Naive thymus-derived CD4-positive, alpha-beta T cell (primary cell): ENCODE measurements at regions of chr1 and their contacts with region 1.

Region 1: GRCh38 chr1:37514350-37515184 is at the start of gene MEAF6:
- DNase-seq: peak; percentile 76 to 92 (median 87)
- ATAC-seq: peak; percentile 99
- H3K4me3 ChIP-seq: peak within 1 kb of the TSS; percentile 87
- H3K4me3 Mint-ChIP-seq: peak within 1 kb of the TSS; percentile 92 to 99 (median 98)
- H3K27ac ChIP-seq: peak within 1 kb of the TSS; percentile 89
- H3K27ac Mint-ChIP-seq: peak within 1 kb of the TSS; percentile 93 to 99 (median 98)
- H3K4me1 ChIP-seq: peaks cover 16 to 22% of the 10 kb centered on the region in 2 donors
- H3K4me1 Mint-ChIP-seq: peaks cover 10 to 50% (median 43%) of the 10 kb centered on the region in 7 donors
- H3K27me3 ChIP-seq: no peaks in the 10 kb centered on the region
- H3K27me3 Mint-ChIP-seq: peaks cover 0 to 4% (median 0%) of the 10 kb centered on the region in 5 donors
- total RNA-seq, gene MEAF6: 45.0 to 89.5 (median 57.7) TPM

Region 2: GRCh38 chr1:36199934-36200741 is 1314.4 kb before region 1 on chr1:
- CTCF ChIA-PET with region 1: no interaction called
- POLR2A ChIA-PET with region 1: no interaction called
- intact Hi-C with region 1: no loop called
- DNase-seq: no peak
- ATAC-seq: no peak
- H3K4me3 ChIP-seq: no peak overlapping the region
- H3K4me3 Mint-ChIP-seq: no peak overlapping the region
- H3K27ac ChIP-seq: no peak overlapping the region
- H3K27ac Mint-ChIP-seq: peak overlapping the region in 2 of 9 donors; percentile 26 to 51
- H3K4me1 ChIP-seq: no peaks in the 10 kb centered on the region
- H3K4me1 Mint-ChIP-seq: peaks cover 0 to 2% (median 0%) of the 10 kb centered on the region in 7 donors
- H3K27me3 ChIP-seq: no peaks in the 10 kb centered on the region
- H3K27me3 Mint-ChIP-seq: peaks cover 0 to 4% (median 0%) of the 10 kb centered on the region in 5 donors

Region 3: DNA sequence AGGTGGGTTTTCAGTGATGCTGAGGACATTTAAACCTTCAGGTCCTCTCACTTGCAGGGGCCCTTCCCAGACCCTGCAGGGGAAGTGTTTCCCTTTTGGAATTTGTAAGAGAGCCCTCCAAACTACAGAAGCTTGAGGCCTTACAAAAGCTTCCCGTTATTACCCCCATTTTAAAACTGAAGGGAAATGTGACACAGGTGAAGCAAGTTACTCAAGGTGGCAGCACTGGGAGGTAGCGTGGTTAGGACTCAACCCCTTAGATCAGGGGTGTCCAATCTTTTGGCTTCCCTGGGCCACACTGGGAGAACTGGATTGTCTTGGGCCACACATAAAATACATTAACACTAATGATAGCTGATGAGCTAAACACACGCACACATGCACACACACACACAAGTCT is 56.0 kb before region 1 on chr1:
- CTCF ChIA-PET with region 1: interaction called, 6 read pairs
- POLR2A ChIA-PET with region 1: interaction called, 4 read pairs
- intact Hi-C with region 1: loop called in 1 of 2 experiments (anchors 1 kb)
- DNase-seq: no peak
- ATAC-seq: no peak
- H3K4me3 ChIP-seq: no peak overlapping the region
- H3K4me3 Mint-ChIP-seq: no peak overlapping the region
- H3K27ac ChIP-seq: no peak overlapping the region
- H3K27ac Mint-ChIP-seq: peak overlapping the region in 3 of 9 donors; percentile 30 to 78 (median 46)
- H3K4me1 ChIP-seq: no peaks in the 10 kb centered on the region
- H3K4me1 Mint-ChIP-seq: peaks cover 4 to 16% (median 11%) of the 10 kb centered on the region in 7 donors
- H3K27me3 ChIP-seq: no peaks in the 10 kb centered on the region
- H3K27me3 Mint-ChIP-seq: no peaks in the 10 kb centered on the region

Region 4: DNA sequence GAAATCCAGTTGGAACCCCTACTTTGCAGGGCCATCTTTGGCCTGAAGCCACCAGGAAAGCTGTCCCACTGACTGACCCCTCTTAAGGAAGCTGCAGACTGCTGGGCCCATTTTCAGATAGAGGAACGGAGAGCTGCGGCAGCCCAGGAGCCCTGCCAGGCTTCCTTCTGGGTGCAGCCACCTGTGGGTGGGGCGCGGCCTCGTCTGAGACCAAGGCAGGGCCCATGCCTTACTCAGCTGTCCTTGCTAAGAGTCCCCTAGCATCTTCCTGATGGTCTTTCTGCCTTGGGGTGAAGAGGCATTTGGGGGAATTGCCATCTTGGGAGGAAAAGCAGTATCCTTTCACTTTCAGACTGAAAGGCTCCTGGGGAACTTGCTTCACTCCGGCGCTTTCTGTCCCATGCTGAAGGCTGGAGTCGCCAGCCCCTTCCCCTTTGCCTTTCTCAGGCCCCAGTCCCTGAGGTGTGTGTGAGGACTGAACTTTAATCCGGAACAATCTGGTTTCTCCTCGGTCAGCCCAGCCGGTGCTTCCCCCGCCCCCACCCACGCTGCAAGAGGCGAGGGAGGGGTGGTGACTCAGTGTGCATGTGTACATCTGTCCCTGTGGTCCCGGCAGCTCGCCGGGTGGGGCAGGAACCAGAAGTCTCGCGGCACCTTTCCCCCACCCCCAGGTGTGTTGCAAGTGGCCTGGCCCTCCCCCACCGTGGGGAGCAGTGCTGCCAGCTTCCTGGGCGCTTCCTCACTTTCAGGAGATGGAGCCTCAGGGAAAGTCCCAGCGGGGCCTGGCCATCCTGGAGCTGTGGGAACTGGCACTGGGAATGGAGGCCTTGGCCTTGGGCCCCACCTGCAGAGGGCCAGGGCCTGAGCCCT is 35.1 kb before region 1 on chr1:
- CTCF ChIA-PET with region 1: interaction called, 4 read pairs
- POLR2A ChIA-PET with region 1: interaction called, 52 read pairs
- intact Hi-C with region 1: loop called (anchors 1 to 2 kb)
- DNase-seq: peak in 8 of 9 donors; percentile 54 to 90 (median 63)
- ATAC-seq: peak; percentile 69
- H3K4me3 ChIP-seq: peak overlapping the region; percentile 87
- H3K4me3 Mint-ChIP-seq: peak overlapping the region; percentile 91 to 99 (median 96)
- H3K27ac ChIP-seq: peak overlapping the region; percentile 95
- H3K27ac Mint-ChIP-seq: peak overlapping the region; percentile 96 to 99 (median 98)
- H3K4me1 ChIP-seq: peaks cover 26% of the 10 kb centered on the region in 2 donors
- H3K4me1 Mint-ChIP-seq: peaks cover 21 to 50% (median 34%) of the 10 kb centered on the region in 7 donors
- H3K27me3 ChIP-seq: no peaks in the 10 kb centered on the region
- H3K27me3 Mint-ChIP-seq: no peaks in the 10 kb centered on the region

Region 5: DNA sequence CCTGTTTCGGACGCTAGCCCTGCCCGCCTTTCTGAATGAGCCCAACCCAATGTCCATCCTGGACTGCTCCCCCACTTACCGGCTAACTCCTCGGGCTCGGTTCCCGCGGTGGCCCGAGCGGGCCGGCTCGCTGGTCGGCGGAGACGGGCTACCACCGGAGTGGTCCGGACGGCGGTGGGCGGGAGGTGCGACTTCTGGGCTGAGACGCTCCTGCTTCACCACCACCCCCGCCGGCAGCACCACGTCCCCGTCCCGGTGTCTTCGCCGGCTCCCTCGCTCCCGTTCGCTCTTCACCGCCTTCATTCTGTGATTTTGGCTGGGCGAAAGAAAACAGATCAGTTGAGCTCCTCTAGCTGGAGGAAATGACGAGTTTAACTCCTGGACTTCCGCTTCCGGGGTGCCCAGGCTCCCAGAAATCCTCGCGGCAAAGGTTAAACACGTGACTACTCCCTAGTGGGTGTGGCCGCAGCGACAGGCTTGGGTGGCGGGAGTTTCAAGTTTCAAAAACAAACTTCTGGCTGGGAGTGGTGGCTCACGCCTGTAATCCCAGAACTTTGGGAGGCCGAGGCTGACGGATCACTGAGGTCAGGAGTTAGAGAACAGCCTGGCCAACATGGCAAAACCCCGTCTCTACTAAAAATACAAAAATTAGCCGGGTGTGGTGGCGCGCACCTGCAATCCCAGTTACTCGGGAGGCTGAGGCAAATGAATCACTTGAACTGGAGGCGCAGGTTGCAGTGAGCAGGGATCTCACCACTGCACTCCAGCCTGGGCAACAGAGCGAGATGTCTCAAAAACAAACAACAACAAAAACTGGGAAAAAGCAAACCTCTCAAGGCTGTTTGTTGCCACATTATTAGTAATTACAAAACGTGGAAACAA is 39.6 kb after region 1 on chr1 and contains the start of gene SNIP1:
- CTCF ChIA-PET with region 1: no interaction called
- POLR2A ChIA-PET with region 1: interaction called, 20 read pairs
- intact Hi-C with region 1: loop called (anchors 1 kb)
- DNase-seq: peak; percentile 67 to 94 (median 92)
- ATAC-seq: peak; percentile 99
- H3K4me3 ChIP-seq: peak within 1 kb of the TSS; percentile 92
- H3K4me3 Mint-ChIP-seq: peak within 1 kb of the TSS; percentile 97 to 100 (median 99)
- H3K27ac ChIP-seq: peak within 1 kb of the TSS; percentile 94
- H3K27ac Mint-ChIP-seq: peak within 1 kb of the TSS; percentile 91 to 99 (median 98)
- H3K4me1 ChIP-seq: peaks cover 10 to 24% of the 10 kb centered on the region in 2 donors
- H3K4me1 Mint-ChIP-seq: peaks cover 23 to 51% (median 45%) of the 10 kb centered on the region in 7 donors
- H3K27me3 ChIP-seq: no peaks in the 10 kb centered on the region
- H3K27me3 Mint-ChIP-seq: peaks cover 0 to 6% (median 0%) of the 10 kb centered on the region in 5 donors
- total RNA-seq, gene SNIP1: 27.8 to 53.6 (median 36.7) TPM

Region 6: GRCh38 chr1:37859507-37860345 is 345.2 kb after region 1 on chr1 and contains the start of gene MTF1:
- CTCF ChIA-PET with region 1: no interaction called
- POLR2A ChIA-PET with region 1: no interaction called
- intact Hi-C with region 1: loop called in 1 of 2 experiments (anchors 1 kb)
- DNase-seq: peak; percentile 85 to 98 (median 97)
- ATAC-seq: peak; percentile 99
- H3K4me3 ChIP-seq: peak within 1 kb of the TSS; percentile 94
- H3K4me3 Mint-ChIP-seq: peak within 1 kb of the TSS; percentile 89 to 100 (median 96)
- H3K27ac ChIP-seq: peak within 1 kb of the TSS; percentile 89
- H3K27ac Mint-ChIP-seq: peak within 1 kb of the TSS; percentile 90 to 99 (median 95)
- H3K4me1 ChIP-seq: peaks cover 12 to 19% of the 10 kb centered on the region in 2 donors
- H3K4me1 Mint-ChIP-seq: peaks cover 26 to 39% (median 33%) of the 10 kb centered on the region in 7 donors
- H3K27me3 ChIP-seq: no peaks in the 10 kb centered on the region
- H3K27me3 Mint-ChIP-seq: no peaks in the 10 kb centered on the region
- total RNA-seq, gene MTF1: 22.9 to 45.2 (median 27.1) TPM